Right ventricle myocardium inferior (tissue), 1 donor: ENCODE measurements at regions of chr19 and their contacts with region 1.

Region 1: GRCh38 chr19:36772311-36773222 is at the start of gene ZNF850:
- DNase-seq: peak; percentile 97
- ATAC-seq: peak; percentile 97
- total RNA-seq, gene ZNF850: 4.1 TPM

Region 2: DNA sequence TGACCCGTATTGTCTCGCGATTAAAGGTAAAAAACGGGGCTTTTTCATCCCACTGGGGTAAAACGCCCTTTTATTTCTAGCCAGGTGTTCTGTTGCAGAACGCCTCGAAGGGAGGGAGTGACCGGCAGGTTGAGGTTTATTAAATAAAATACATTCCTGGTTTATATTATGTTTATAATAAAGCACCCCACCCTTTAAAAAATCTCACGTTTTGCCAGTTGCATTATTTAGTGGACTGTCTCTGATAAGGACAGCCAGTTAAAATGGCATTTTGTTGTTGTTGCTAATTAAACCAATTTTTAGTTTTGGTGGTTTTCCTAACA is 25.2 kb after region 1 on chr19:
- intact Hi-C with region 1: loop called (anchors 1 kb)
- DNase-seq: no peak
- ATAC-seq: no peak

Region 3: GRCh38 chr19:36837906-36838783 is 65.6 kb after region 1 on chr19 and contains the start of gene ZNF790:
- intact Hi-C with region 1: no loop called
- DNase-seq: peak; percentile 94
- ATAC-seq: peak; percentile 98
- total RNA-seq, gene ZNF790: 8.3 TPM

Region 4: GRCh38 chr19:36850559-36851442 is 78.2 kb after region 1 on chr19 and contains the start of gene ZNF345:
- intact Hi-C with region 1: loop called (anchors 2 kb)
- DNase-seq: peak; percentile 94
- ATAC-seq: peak; percentile 97
- total RNA-seq, gene ZNF345: 3.1 TPM

Region 5: DNA sequence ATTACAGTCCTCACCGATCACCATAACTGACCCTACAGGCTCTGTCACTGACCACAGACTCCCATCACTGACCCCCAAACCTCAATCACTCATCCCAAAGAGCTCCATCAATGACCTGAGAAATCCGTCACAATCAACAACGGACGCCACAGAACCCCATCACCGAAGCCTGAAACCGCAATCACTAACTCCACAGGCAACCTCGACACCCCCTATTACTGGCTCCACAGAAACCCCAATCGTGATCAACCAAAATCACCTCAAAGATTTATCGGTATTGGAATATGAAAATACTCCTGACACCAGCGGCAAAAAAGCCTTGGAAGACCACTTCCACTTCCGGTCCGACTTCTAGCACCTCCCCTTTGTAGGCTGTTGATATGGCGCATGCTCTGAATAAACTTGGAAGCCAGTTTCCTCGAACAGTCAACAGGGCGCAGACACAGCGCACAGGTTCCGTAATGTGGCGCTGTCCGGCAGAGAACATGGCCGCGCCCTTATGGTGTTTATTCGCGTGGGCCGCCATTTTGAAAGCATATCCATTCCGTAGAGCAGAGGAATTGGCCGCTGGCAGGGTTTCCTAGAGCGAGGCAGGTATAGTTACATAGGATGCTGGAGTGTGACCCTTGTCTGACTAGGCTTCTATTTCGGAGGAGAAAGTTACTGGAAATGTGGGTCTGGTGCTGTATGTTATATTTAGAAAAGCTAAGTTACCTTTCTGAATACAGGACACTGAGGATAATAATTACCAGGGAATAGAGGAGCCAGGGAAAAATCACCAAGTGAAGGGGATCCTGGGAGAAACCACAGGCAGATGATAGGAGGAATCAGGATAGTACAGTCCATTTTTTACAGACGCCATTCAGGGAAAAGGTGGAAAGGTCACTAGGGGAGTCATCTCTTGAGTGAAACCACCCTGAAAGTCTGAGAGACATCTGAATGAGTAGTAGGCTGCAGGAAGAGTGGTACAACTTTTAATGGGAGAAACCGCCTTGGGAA is 400.1 kb after region 1 on chr19 and contains the start of gene ZNF585A:
- intact Hi-C with region 1: loop called (anchors 10 kb)
- DNase-seq: peak; percentile 97
- ATAC-seq: peak; percentile 100
- total RNA-seq, gene ZNF585A: 10.3 TPM